ENCODE measurements at regions of chr12 and their contacts with region 1.

Region 1: GRCh38 chr12:64491718-64492117 is 39.8 kb downstream of the TBK1 start:
- DNase-seq: no peak
- H3K4me3 Mint-ChIP-seq: no peak overlapping the region
- H3K27ac Mint-ChIP-seq: peak overlapping the region; percentile 49
- H3K4me1 Mint-ChIP-seq: peaks cover 30% of the 10 kb centered on the region
- H3K27me3 Mint-ChIP-seq: no peaks in the 10 kb centered on the region

Region 2: GRCh38 chr12:64446295-64446694 is 45.4 kb before region 1 on chr12:
- CTCF ChIA-PET with region 1: no interaction called
- POLR2A ChIA-PET with region 1: no interaction called
- intact Hi-C with region 1: loop called (anchors 1 kb)
- DNase-seq: no peak
- H3K4me3 Mint-ChIP-seq: no peak overlapping the region
- H3K27ac Mint-ChIP-seq: peak overlapping the region; percentile 9
- H3K4me1 Mint-ChIP-seq: peaks cover 39% of the 10 kb centered on the region
- H3K27me3 Mint-ChIP-seq: no peaks in the 10 kb centered on the region

Region 3: DNA sequence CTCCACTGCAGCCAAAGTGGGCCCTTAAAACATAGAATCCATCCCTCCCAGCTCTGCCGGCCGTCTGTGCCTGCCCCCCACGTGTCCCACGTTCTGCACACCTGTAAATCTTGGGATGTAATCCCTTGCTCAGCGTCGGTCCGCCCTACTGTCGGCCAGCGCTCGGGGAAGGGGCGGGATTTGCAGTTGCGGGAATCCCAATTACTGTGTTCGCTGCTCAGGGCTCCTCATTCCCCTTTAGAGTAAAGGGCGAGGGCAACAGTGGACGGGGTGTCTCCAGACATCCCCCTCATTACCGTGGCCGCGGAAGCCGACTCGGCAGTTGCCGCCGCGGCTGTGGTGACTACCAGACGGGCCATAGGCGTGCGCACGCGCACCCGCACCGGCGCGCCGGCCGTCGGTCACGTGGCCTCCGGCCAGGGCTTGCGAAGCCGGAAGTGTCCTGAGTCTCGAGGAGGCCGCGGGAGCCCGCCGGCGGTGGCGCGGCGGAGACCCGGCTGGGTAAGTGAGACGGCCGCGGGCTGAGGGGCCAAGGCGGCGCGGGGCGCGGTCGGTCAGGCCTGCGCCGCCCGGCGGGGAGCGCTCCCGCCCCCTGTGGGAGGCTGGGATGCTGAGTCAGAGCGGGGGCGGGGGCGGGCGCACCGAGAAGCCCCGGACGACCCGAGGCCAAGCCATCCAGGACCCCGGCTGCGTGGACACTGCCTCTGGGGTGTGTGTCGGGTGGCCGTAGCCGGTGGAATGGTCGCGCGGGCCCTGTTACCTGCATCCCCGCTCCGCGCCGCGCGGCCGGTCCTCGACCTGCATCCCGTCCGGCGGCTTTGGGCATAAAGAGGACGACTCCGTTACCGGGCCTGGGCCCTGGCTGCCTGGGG is 39.8 kb before region 1 on chr12 and contains the start of gene TBK1:
- CTCF ChIA-PET with region 1: no interaction called
- POLR2A ChIA-PET with region 1: no interaction called
- intact Hi-C with region 1: loop called (anchors 2 kb)
- DNase-seq: peak; percentile 77
- H3K4me3 Mint-ChIP-seq: peak within 1 kb of the TSS; percentile 96
- H3K27ac Mint-ChIP-seq: peak within 1 kb of the TSS; percentile 95
- H3K4me1 Mint-ChIP-seq: peaks cover 42% of the 10 kb centered on the region
- H3K27me3 Mint-ChIP-seq: no peaks in the 10 kb centered on the region
- total RNA-seq, gene TBK1: 21.7 to 23.4 TPM

Region 4: GRCh38 chr12:64469455-64470142 is 22.1 kb before region 1 on chr12:
- CTCF ChIA-PET with region 1: no interaction called
- POLR2A ChIA-PET with region 1: no interaction called
- intact Hi-C with region 1: no loop called
- DNase-seq: no peak
- H3K4me3 Mint-ChIP-seq: no peak overlapping the region
- H3K27ac Mint-ChIP-seq: no peak overlapping the region
- H3K4me1 Mint-ChIP-seq: no peaks in the 10 kb centered on the region
- H3K27me3 Mint-ChIP-seq: no peaks in the 10 kb centered on the region

Measured in activated CD4-positive, alpha-beta memory T cell treated with anti-CD3 and anti-CD28 coated beads for 36 hours (primary cell).